Mammary epithelial cell (primary cell): ENCODE measurements at regions of chr17 and their contacts with region 1.

Region 1: DNA sequence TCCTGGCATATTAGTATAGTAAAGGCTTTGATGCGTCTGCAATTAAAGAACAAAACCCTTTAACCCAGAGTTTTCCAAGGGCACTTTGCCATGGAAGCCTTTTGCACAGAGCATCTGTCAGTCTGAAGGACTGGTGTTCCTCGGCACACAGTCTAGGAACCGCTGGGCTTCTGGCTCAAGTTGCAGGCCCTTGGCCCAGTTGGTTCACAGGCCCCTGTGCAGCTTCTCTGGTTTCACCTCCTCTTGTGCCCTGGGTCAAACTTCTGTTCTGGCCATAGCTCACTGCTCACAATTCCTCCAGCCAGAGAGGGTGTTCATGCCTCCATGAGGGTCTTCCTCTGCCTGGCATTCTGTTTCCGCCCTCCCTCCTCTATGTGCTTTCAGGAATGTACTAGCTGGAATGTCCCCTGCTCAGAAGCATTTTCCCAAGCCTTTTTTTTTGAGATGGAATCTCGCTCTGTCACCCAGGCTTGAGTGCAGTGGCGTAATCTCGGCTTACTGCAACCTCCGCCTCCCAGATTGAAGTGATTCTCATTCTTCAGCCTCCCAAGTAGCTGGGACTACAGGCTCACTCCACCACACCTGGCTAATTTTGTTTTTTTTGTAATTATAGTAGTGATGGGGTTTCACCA is 34.5 kb upstream of the TEX2 start:
- DNase-seq: no peak
- H3K4me3 ChIP-seq: no peak overlapping the region
- H3K27ac ChIP-seq: no peak overlapping the region
- H3K4me1 ChIP-seq: peaks cover 3% of the 10 kb centered on the region
- H3K27me3 ChIP-seq: no peaks in the 10 kb centered on the region
- CTCF ChIP-seq: no peak

Region 2: DNA sequence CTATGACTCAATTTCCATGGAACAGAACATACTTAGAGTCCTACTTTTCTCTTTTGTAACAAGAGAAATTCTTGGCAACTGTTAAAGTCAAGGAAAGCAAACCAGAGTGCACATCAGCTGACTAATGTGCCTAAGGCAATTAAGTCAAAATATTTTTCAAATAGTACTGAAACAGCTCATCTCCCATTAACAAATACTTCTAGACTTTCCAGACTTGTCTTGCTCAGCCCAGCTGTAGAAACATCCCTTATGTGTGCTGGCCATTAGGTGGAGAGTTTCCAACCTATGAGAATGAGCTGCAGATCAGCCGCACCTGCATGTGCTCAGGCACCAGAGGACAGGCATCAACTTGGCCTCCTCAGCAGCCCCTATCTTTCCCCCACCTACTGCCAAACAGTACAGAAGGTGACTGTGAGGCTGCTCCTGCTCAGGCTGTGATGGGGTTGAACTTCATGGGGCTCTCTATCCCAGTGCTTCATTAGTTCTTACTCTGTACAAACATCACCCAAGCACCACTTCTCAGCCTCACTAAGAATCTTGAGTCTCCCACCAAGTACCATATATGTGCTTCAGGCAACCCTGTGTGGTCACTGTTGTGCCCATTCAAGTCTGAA is 66.7 kb before region 1 on chr17:
- CTCF ChIA-PET with region 1: interaction called, 20 read pairs
- dilution Hi-C with region 1: no loop called
- in situ Hi-C with region 1: no loop called
- intact Hi-C with region 1: no loop called
- DNase-seq: peak; percentile 97
- H3K4me3 ChIP-seq: no peak overlapping the region
- H3K27ac ChIP-seq: peak overlapping the region; percentile 67
- H3K4me1 ChIP-seq: peaks cover 32% of the 10 kb centered on the region
- H3K27me3 ChIP-seq: no peaks in the 10 kb centered on the region
- CTCF ChIP-seq: peak in 1 of 2 donors; percentile 32

Region 3: GRCh38 chr17:64240741-64241347 is 56.7 kb before region 1 on chr17:
- CTCF ChIA-PET with region 1: interaction called, 20 read pairs
- dilution Hi-C with region 1: no loop called
- in situ Hi-C with region 1: no loop called
- intact Hi-C with region 1: no loop called
- DNase-seq: peak; percentile 65
- H3K4me3 ChIP-seq: no peak overlapping the region
- H3K27ac ChIP-seq: peak overlapping the region; percentile 11
- H3K4me1 ChIP-seq: peaks cover 49% of the 10 kb centered on the region
- H3K27me3 ChIP-seq: no peaks in the 10 kb centered on the region
- CTCF ChIP-seq: no peak